ENCODE measurements at regions of chr4 and their contacts with region 1.

Region 1: DNA sequence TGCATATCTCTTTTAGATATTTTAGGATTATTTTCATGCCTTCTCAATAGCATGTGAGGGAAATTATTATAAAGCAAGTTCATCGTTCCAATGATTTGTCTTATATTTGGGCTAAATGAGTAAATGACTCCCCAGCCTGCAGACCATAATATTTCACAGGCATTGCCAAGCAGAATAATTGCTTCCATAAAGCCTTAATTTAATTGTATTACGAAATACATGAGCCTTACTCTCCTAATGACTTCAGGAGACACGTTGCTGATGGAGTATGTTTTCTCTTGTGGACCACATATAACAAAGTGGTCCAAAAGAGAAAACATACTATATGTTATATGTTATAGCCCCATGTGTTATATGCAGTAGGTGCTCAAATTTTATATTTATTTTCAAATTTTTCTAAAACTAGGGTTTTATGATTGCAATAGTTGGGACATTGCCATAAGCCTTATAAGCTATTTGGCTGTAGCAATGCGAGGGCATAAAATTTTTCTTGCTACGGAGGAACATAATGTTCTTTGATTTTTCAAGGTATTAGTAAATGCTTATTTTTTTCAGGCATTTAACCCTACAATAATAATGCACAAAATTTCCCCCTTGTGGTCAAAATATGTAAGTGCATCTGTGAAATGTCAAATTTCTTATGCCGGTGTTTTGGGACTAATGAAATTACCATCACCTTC is 26.2 kb upstream of the TMPRSS11D start:
- DNase-seq: peak; percentile 50
- H3K4me3 Mint-ChIP-seq: no peak overlapping the region
- H3K27ac Mint-ChIP-seq: no peak overlapping the region
- H3K4me1 Mint-ChIP-seq: no peaks in the 10 kb centered on the region
- H3K27me3 Mint-ChIP-seq: no peaks in the 10 kb centered on the region
- CTCF ChIP-seq: peak; percentile 65

Region 2: DNA sequence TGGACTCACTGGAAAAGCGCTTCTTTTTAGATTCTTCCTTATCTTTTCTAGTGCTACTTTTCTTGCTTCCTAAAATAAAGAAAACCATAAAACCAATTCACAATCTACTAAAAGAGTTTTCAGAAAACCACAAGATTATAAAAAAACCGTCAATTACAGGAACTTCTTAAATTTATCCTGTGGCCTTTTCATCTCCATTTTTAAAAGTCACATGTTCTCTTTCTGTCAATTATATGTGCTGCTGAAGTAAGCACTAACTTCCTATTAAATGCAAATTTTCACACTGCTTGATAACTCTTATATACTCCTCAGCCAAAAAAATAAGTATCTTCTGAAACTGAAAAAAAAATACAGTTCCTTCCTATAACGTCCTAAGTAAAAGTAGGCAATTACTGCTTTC is 397.5 kb before region 1 on chr4:
- CTCF ChIA-PET with region 1: no interaction called
- POLR2A ChIA-PET with region 1: no interaction called
- intact Hi-C with region 1: no loop called
- DNase-seq: no peak
- H3K4me3 Mint-ChIP-seq: no peak overlapping the region
- H3K27ac Mint-ChIP-seq: no peak overlapping the region
- H3K4me1 Mint-ChIP-seq: no peaks in the 10 kb centered on the region
- H3K27me3 Mint-ChIP-seq: no peaks in the 10 kb centered on the region
- CTCF ChIP-seq: no peak

Region 3: GRCh38 chr4:67545199-67546003 is 364.6 kb before region 1 on chr4 and contains the start of gene CENPC:
- CTCF ChIA-PET with region 1: interaction called, 10 read pairs
- POLR2A ChIA-PET with region 1: no interaction called
- intact Hi-C with region 1: loop called (anchors 1 kb)
- DNase-seq: peak; percentile 98
- H3K4me3 Mint-ChIP-seq: peak within 1 kb of the TSS; percentile 94
- H3K27ac Mint-ChIP-seq: peak within 1 kb of the TSS; percentile 99
- H3K4me1 Mint-ChIP-seq: peaks cover 23% of the 10 kb centered on the region
- H3K27me3 Mint-ChIP-seq: no peaks in the 10 kb centered on the region
- CTCF ChIP-seq: no peak
- total RNA-seq, gene CENPC: 17.7 and 19.0 TPM in 2 replicates

Region 4: GRCh38 chr4:67861513-67861912 is 48.5 kb before region 1 on chr4:
- CTCF ChIA-PET with region 1: interaction called, 15 read pairs
- POLR2A ChIA-PET with region 1: interaction called, 3 read pairs
- intact Hi-C with region 1: no loop called
- DNase-seq: peak; percentile 49
- H3K4me3 Mint-ChIP-seq: peak overlapping the region; percentile 67
- H3K27ac Mint-ChIP-seq: peak overlapping the region; percentile 68
- H3K4me1 Mint-ChIP-seq: peaks cover 6% of the 10 kb centered on the region
- H3K27me3 Mint-ChIP-seq: no peaks in the 10 kb centered on the region
- CTCF ChIP-seq: no peak

Region 5: GRCh38 chr4:67892905-67893304 is 17.1 kb before region 1 on chr4:
- CTCF ChIA-PET with region 1: interaction called, 14 read pairs
- POLR2A ChIA-PET with region 1: no interaction called
- intact Hi-C with region 1: no loop called
- DNase-seq: no peak
- H3K4me3 Mint-ChIP-seq: no peak overlapping the region
- H3K27ac Mint-ChIP-seq: no peak overlapping the region
- H3K4me1 Mint-ChIP-seq: peaks cover 11% of the 10 kb centered on the region
- H3K27me3 Mint-ChIP-seq: no peaks in the 10 kb centered on the region
- CTCF ChIP-seq: no peak

Region 6: DNA sequence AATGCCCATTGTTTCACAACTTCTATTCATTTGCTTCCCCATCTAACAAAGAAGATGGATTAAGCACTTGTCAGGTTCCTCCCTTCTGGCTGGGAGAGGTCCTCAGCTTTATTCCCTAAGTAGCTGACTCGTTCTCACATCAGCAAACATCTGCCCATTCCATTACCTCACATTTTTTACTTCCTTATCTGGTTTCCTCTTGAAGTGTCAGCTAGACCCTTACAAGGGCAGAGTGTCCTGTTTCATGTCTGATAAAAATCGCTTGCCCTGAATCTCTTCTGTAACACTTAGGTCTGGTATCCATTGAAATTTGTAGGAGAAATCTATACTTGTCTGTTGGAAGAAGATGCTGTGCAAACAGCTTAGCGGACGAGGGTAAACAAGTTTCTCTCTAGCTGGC is 18.5 kb after region 1 on chr4:
- CTCF ChIA-PET with region 1: interaction called, 25 read pairs
- POLR2A ChIA-PET with region 1: interaction called, 3 read pairs
- intact Hi-C with region 1: no loop called
- DNase-seq: peak; percentile 14
- H3K4me3 Mint-ChIP-seq: no peak overlapping the region
- H3K27ac Mint-ChIP-seq: no peak overlapping the region
- H3K4me1 Mint-ChIP-seq: peaks cover 19% of the 10 kb centered on the region
- H3K27me3 Mint-ChIP-seq: no peaks in the 10 kb centered on the region
- CTCF ChIP-seq: no peak